ENCODE measurements at regions of chr3 and their contacts with region 1.

Region 1: GRCh38 chr3:183766745-183767606 is 58.4 kb downstream of the MAP6D1 start:
- DNase-seq: peak; percentile 68
- H3K4me3 ChIP-seq: no peak overlapping the region
- H3K27ac ChIP-seq: no peak overlapping the region
- H3K4me1 ChIP-seq: peaks cover 16% of the 10 kb centered on the region
- H3K27me3 ChIP-seq: no peaks in the 10 kb centered on the region
- CTCF ChIP-seq: peak; percentile 60 to 82

Region 2: GRCh38 chr3:183178629-183179549 is 588.1 kb before region 1 on chr3:
- CTCF ChIA-PET with region 1: no interaction called
- dilution Hi-C with region 1: no loop called
- in situ Hi-C with region 1: no loop called
- intact Hi-C with region 1: loop called (anchors 1 kb)
- DNase-seq: peak; percentile 46
- H3K4me3 ChIP-seq: peak overlapping the region; percentile 55 to 62 (median 60)
- H3K27ac ChIP-seq: no peak overlapping the region
- H3K4me1 ChIP-seq: peaks cover 4% of the 10 kb centered on the region
- H3K27me3 ChIP-seq: no peaks in the 10 kb centered on the region
- CTCF ChIP-seq: peak in 1 of 2 donors; percentile 26

Region 3: DNA sequence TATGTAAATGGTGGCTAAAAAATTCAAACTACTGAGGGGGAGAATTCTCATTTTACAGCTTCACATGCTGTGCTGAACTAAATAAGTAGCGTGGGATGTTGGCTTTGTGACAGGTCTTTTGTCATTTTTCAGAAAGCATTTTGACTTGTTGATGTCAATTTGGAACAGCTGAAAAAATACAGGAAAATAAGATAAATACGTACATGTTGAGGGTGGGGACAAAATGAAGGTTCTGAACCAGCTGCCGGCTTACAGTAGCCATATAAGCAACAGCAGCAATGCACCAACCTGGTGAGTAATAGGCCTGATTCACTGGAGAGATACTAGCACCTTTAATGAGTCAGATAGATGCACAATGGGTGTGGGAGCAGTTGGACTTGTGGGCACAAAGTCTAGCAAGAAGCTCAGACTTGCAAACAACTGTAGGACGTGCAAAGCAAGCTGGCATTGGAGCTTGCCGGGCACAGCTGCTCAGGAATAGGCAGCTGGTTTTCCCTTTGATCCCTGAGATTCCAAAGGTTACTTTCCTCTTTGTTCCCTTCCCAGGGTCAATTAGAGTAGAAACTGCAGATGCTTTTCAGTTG is 501.1 kb before region 1 on chr3:
- CTCF ChIA-PET with region 1: no interaction called
- dilution Hi-C with region 1: no loop called
- in situ Hi-C with region 1: no loop called
- intact Hi-C with region 1: no loop called
- DNase-seq: peak; percentile 99
- H3K4me3 ChIP-seq: no peak overlapping the region
- H3K27ac ChIP-seq: peak overlapping the region; percentile 94
- H3K4me1 ChIP-seq: peaks cover 58% of the 10 kb centered on the region
- H3K27me3 ChIP-seq: no peaks in the 10 kb centered on the region
- CTCF ChIP-seq: no peak

Region 4: DNA sequence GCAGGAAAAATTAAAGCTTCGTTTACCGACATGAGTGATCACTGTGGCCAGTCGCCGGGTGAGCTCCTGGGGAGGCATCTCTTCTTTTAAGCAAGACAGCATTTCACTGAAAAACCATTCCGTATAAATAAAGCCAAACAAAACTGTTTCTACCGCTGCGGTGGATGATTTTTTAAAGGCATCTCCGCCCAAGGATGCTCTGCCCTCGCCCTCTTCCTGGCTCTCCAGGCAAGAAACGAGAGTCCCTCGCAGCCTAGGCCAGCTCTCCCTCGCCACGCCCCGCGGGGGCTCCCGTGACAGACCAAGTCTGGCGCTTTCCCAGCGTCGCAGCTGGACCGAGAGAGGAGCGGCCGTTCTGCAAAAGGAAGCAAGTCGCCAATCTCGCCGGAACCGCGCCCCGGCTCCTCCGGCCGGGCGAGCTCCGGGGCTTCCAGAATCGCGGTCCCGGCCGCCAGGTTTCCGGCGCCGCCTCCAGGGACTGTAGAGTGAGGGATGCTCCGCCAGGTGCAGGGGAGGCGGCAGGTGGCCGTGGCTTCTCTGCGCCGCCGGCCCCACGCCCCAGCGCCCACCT is 339.0 kb before region 1 on chr3:
- CTCF ChIA-PET with region 1: no interaction called
- dilution Hi-C with region 1: no loop called
- in situ Hi-C with region 1: no loop called
- intact Hi-C with region 1: loop called (anchors 1 kb)
- DNase-seq: peak; percentile 51
- H3K4me3 ChIP-seq: peak overlapping the region; percentile 68 to 94 (median 80)
- H3K27ac ChIP-seq: no peak overlapping the region
- H3K4me1 ChIP-seq: peaks cover 15% of the 10 kb centered on the region
- H3K27me3 ChIP-seq: peaks cover 2% of the 10 kb centered on the region
- CTCF ChIP-seq: no peak

Region 5: GRCh38 chr3:183468424-183468823 is 298.6 kb before region 1 on chr3:
- CTCF ChIA-PET with region 1: no interaction called
- dilution Hi-C with region 1: no loop called
- in situ Hi-C with region 1: loop called (anchors 5 to 10 kb)
- intact Hi-C with region 1: loop called (anchors 1 kb)
- DNase-seq: no peak
- H3K4me3 ChIP-seq: no peak overlapping the region
- H3K27ac ChIP-seq: no peak overlapping the region
- H3K4me1 ChIP-seq: no peaks in the 10 kb centered on the region
- H3K27me3 ChIP-seq: peaks cover 2% of the 10 kb centered on the region
- CTCF ChIP-seq: no peak

Region 6: GRCh38 chr3:183560607-183561006 is 206.4 kb before region 1 on chr3:
- CTCF ChIA-PET with region 1: no interaction called
- dilution Hi-C with region 1: no loop called
- in situ Hi-C with region 1: no loop called
- intact Hi-C with region 1: loop called (anchors 5 kb)
- DNase-seq: peak; percentile 36
- H3K4me3 ChIP-seq: no peak overlapping the region
- H3K27ac ChIP-seq: no peak overlapping the region
- H3K4me1 ChIP-seq: peaks cover 4% of the 10 kb centered on the region
- H3K27me3 ChIP-seq: no peaks in the 10 kb centered on the region
- CTCF ChIP-seq: peak in 1 of 2 donors; percentile 58

Region 7: DNA sequence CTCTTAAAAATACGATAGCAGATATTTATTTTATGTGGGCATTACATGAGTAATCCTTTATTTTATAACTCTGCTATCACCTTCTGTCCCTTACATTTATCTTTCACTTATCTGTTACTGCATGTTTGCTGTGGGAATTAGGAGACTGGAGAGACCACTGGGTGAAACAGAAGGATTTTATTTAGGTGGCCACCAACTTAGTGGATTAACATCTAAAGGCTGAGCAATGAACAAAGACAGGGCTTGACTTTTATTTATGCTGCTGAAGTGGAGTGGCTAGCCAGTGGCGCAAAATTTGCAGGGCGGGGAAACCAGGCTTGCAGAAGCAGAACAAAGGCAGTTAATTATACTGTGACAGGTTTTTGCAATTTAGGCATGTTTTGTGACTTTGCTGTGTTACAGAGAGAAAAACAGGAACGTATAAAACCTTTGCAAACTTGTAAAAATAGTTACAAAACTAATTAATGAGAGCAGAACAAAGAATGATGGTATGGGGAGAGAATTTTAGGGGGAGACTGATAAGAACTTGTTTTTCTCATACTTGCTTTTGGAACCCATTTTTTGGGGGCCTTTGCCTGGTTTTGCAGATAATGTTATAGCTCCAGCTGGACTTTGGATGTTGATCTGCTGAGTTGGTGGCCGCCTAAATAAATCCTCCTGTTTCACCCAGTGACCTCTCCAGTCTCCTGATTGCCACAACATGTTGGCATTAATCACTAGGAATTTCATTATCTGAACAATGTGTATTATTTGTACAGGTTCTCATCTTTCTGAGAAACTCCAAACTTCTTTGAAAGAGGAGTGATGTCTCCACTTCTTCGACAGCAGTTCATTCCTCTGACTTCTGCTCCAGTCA is 113.5 kb before region 1 on chr3:
- CTCF ChIA-PET with region 1: no interaction called
- dilution Hi-C with region 1: no loop called
- in situ Hi-C with region 1: no loop called
- intact Hi-C with region 1: no loop called
- DNase-seq: peak; percentile 4
- H3K4me3 ChIP-seq: no peak overlapping the region
- H3K27ac ChIP-seq: no peak overlapping the region
- H3K4me1 ChIP-seq: no peaks in the 10 kb centered on the region
- H3K27me3 ChIP-seq: no peaks in the 10 kb centered on the region
- CTCF ChIP-seq: no peak

Region 8: DNA sequence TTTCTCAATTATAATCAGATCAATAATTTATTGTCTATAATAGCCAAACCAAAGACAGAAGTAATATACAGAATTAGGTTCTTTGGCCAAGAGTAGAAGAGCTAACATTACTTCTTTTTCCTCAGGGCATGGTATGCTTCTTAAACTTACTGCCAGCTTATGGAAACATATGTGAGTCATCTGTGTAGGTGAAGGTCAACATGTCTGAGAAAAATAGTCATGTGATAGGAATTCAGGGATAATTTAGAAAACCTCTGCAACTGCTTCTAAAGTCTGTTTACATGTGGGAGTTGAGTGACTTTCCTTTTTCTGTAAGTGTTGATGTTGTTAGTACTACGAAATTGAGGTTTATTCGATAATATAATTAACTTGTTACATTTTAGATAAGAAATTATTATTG is 77.6 kb after region 1 on chr3:
- CTCF ChIA-PET with region 1: no interaction called
- dilution Hi-C with region 1: no loop called
- in situ Hi-C with region 1: no loop called
- intact Hi-C with region 1: no loop called
- DNase-seq: peak; percentile 75
- H3K4me3 ChIP-seq: no peak overlapping the region
- H3K27ac ChIP-seq: peak overlapping the region; percentile 57
- H3K4me1 ChIP-seq: peaks cover 22% of the 10 kb centered on the region
- H3K27me3 ChIP-seq: no peaks in the 10 kb centered on the region
- CTCF ChIP-seq: no peak

Measured in mammary epithelial cell (primary cell).